Activated naive CD4-positive, alpha-beta T cell treated with anti-CD3 and anti-CD28 coated beads, Interleukin-2, amount 10 ng/mL, durations not matched to agents 7 days and 5 days (primary cell): ENCODE measurements at regions of chr19 and their contacts with region 1.

Region 1: GRCh38 chr19:48674921-48675824 is 2.4 kb upstream of the NTN5 start:
- DNase-seq: peak; percentile 86
- H3K4me3 Mint-ChIP-seq: no peak overlapping the region
- H3K27ac Mint-ChIP-seq: no peak overlapping the region
- H3K4me1 Mint-ChIP-seq: peaks cover 6% of the 10 kb centered on the region
- H3K27me3 Mint-ChIP-seq: peaks cover 27% of the 10 kb centered on the region

Region 2: DNA sequence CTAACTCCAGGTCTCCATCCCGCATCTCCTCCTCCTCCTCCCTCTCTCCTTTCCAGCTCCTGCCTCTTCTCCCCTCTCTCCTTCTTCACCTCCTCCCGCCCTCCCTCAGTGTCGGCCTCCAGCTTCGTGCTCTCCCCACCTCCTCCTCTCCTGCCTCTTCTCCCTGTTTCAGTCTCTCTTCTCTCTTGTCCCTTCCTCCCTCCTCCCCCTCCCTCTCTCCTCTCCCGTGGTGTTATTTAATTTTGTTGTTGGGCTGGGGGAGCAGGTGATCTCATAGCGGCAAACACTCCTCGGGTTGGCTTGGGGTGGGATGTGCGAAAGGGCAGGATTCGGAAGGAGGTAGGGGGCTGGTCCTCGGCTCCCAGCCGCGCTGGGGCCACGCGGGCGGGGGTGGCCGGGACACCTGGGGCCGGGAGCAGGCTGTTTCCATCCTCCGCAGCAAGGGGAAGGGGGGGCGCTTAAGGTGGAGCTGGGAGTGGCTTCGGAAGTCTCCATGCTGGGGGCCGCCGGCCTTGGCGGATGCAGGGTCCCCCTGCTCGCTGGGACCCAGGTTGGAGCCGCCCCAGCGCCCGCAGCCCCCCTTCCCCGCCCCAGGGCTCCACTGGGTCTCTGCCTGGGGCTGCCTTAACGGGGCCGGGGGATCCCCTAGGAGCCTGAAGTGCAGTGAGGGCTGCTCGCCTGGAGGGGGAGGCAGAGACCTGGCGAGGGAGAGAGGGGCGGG is 29.0 kb before region 1 on chr19 and contains the start of gene CA11:
- CTCF ChIA-PET with region 1: interaction called, 31 read pairs
- DNase-seq: peak; percentile 95
- H3K4me3 Mint-ChIP-seq: peak within 1 kb of the TSS; percentile 75
- H3K27ac Mint-ChIP-seq: peak within 1 kb of the TSS; percentile 81
- H3K4me1 Mint-ChIP-seq: peaks cover 55% of the 10 kb centered on the region
- H3K27me3 Mint-ChIP-seq: peaks cover 16% of the 10 kb centered on the region

Region 3: GRCh38 chr19:48770260-48770659 is 95.1 kb after region 1 on chr19:
- CTCF ChIA-PET with region 1: no interaction called
- DNase-seq: no peak
- H3K4me3 Mint-ChIP-seq: no peak overlapping the region
- H3K27ac Mint-ChIP-seq: no peak overlapping the region
- H3K4me1 Mint-ChIP-seq: no peaks in the 10 kb centered on the region
- H3K27me3 Mint-ChIP-seq: peaks cover 52% of the 10 kb centered on the region